ENCODE measurements at regions of chr6 and their contacts with region 1.

Region 1: GRCh38 chr6:144582939-144583613 is 297.9 kb downstream of the UTRN start:
- DNase-seq: no peak
- ATAC-seq: no peak
- H3K4me3 ChIP-seq: no peak overlapping the region
- H3K27ac ChIP-seq: no peak overlapping the region
- H3K4me1 ChIP-seq: peaks cover 0 to 13% of the 10 kb centered on the region in 2 experiments; a peak in 2 of 4 replicates
- H3K27me3 ChIP-seq: no peaks in the 10 kb centered on the region
- CTCF ChIP-seq: no peak
- POLR2A ChIP-seq: no peak
- RAD21 ChIP-seq: no peak

Region 2: GRCh38 chr6:143872201-143872600 is 710.9 kb before region 1 on chr6:
- CTCF ChIA-PET with region 1: no interaction called
- POLR2A ChIA-PET with region 1: no interaction called
- RAD21 ChIA-PET with region 1: no interaction called
- intact Hi-C with region 1: no loop called
- DNase-seq: no peak
- ATAC-seq: no peak
- H3K4me3 ChIP-seq: no peak overlapping the region
- H3K27ac ChIP-seq: no peak overlapping the region
- H3K4me1 ChIP-seq: no peaks in the 10 kb centered on the region
- H3K27me3 ChIP-seq: no peaks in the 10 kb centered on the region
- CTCF ChIP-seq: no peak
- POLR2A ChIP-seq: no peak
- RAD21 ChIP-seq: no peak

Region 3: GRCh38 chr6:144931172-144932035 is 348.3 kb after region 1 on chr6:
- CTCF ChIA-PET with region 1: interaction called, 3 read pairs
- POLR2A ChIA-PET with region 1: no interaction called
- RAD21 ChIA-PET with region 1: no interaction called
- intact Hi-C with region 1: loop called (anchors 1 kb)
- DNase-seq: no peak
- ATAC-seq: peak; percentile 63
- H3K4me3 ChIP-seq: no peak overlapping the region
- H3K27ac ChIP-seq: peak overlapping the region; percentile 76; the same call in 1 of the 2 replicates
- H3K4me1 ChIP-seq: peaks cover 0 to 43% of the 10 kb centered on the region in 2 experiments; a peak in 2 of 4 replicates
- H3K27me3 ChIP-seq: no peaks in the 10 kb centered on the region
- CTCF ChIP-seq: peak; percentile 47 to 78 (median 69); a peak in 5 of 6 replicates
- POLR2A ChIP-seq: no peak
- RAD21 ChIP-seq: peak; percentile 80

Region 4: GRCh38 chr6:144999127-144999526 is 416.1 kb after region 1 on chr6:
- CTCF ChIA-PET with region 1: no interaction called
- POLR2A ChIA-PET with region 1: no interaction called
- RAD21 ChIA-PET with region 1: no interaction called
- intact Hi-C with region 1: no loop called
- DNase-seq: no peak
- ATAC-seq: peak; percentile 47; the same call in 1 of the 2 replicates
- H3K4me3 ChIP-seq: no peak overlapping the region
- H3K27ac ChIP-seq: no peak overlapping the region
- H3K4me1 ChIP-seq: peaks cover 0 to under 1% of the 10 kb centered on the region in 2 experiments; a peak in 1 of 4 replicates
- H3K27me3 ChIP-seq: no peaks in the 10 kb centered on the region
- CTCF ChIP-seq: no peak
- POLR2A ChIP-seq: no peak
- RAD21 ChIP-seq: peak; percentile 28; the same call in 1 of the 2 replicates

Region 5: DNA sequence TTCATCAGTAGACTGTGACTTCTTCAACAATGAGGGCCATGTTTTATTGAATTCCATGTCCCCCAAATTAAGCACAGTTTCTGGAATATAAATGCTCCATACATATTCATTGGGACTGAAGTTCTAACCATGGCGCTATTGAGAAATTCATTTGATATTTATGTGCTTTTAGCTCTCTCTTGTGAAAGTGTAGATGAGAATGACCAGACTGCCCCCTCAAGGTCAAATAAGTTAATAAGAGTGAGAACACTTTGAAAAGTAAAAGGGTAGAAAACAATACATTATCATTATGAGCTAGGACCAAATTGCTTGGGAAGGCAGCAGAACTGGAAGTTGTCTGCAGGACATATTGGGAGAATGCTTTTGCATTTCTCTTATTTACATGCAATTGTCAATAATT is 554.4 kb after region 1 on chr6:
- CTCF ChIA-PET with region 1: interaction called, 28 read pairs
- POLR2A ChIA-PET with region 1: no interaction called
- RAD21 ChIA-PET with region 1: interaction called in 1 of 2 experiments, 4 read pairs
- intact Hi-C with region 1: loop called (anchors 1 kb)
- DNase-seq: no peak
- ATAC-seq: peak; percentile 60
- H3K4me3 ChIP-seq: no peak overlapping the region
- H3K27ac ChIP-seq: no peak overlapping the region
- H3K4me1 ChIP-seq: no peaks in the 10 kb centered on the region
- H3K27me3 ChIP-seq: no peaks in the 10 kb centered on the region
- CTCF ChIP-seq: peak; percentile 16 to 40 (median 34); a peak in 2 of 6 replicates
- POLR2A ChIP-seq: no peak
- RAD21 ChIP-seq: peak; percentile 75

Region 6: GRCh38 chr6:145483191-145483996 is 900.3 kb after region 1 on chr6:
- CTCF ChIA-PET with region 1: no interaction called
- POLR2A ChIA-PET with region 1: no interaction called
- RAD21 ChIA-PET with region 1: no interaction called
- intact Hi-C with region 1: loop called (anchors 10 kb)
- DNase-seq: peak; percentile 80
- ATAC-seq: peak; percentile 92
- H3K4me3 ChIP-seq: peak overlapping the region in 1 of 2 experiments; percentile 25; a peak in 2 of 4 replicates
- H3K27ac ChIP-seq: peak overlapping the region; percentile 38; the same call in 1 of the 2 replicates
- H3K4me1 ChIP-seq: peaks cover 10 to 22% of the 10 kb centered on the region in 2 experiments; a peak in 3 of 4 replicates
- H3K27me3 ChIP-seq: no peaks in the 10 kb centered on the region
- CTCF ChIP-seq: no peak
- POLR2A ChIP-seq: no peak
- RAD21 ChIP-seq: no peak

Region 7: GRCh38 chr6:145704143-145704781 is 1121.2 kb after region 1 on chr6:
- CTCF ChIA-PET with region 1: interaction called, 8 read pairs
- POLR2A ChIA-PET with region 1: no interaction called
- RAD21 ChIA-PET with region 1: no interaction called
- intact Hi-C with region 1: loop called (anchors 5 kb)
- DNase-seq: no peak
- ATAC-seq: no peak
- H3K4me3 ChIP-seq: no peak overlapping the region
- H3K27ac ChIP-seq: no peak overlapping the region
- H3K4me1 ChIP-seq: peaks cover 0 to 4% of the 10 kb centered on the region in 2 experiments; a peak in 1 of 4 replicates
- H3K27me3 ChIP-seq: no peaks in the 10 kb centered on the region
- CTCF ChIP-seq: peak in 2 of 3 experiments; percentile 38 to 43; a peak in 2 of 6 replicates
- POLR2A ChIP-seq: no peak
- RAD21 ChIP-seq: peak; percentile 61